ENCODE measurements at regions of chr19 and their contacts with region 1.

Region 1: GRCh38 chr19:39384839-39385568 is 5.9 kb downstream of the PAF1 start:
- DNase-seq: no peak
- ATAC-seq: peak; percentile 17

Region 2: GRCh38 chr19:39246951-39247669 is 137.9 kb before region 1 on chr19:
- intact Hi-C with region 1: no loop called
- DNase-seq: no peak
- ATAC-seq: no peak

Region 3: GRCh38 chr19:39307046-39307823 is 77.8 kb before region 1 on chr19:
- intact Hi-C with region 1: no loop called
- DNase-seq: no peak
- ATAC-seq: peak; percentile 39

Region 4: GRCh38 chr19:39351537-39352064 is 33.4 kb before region 1 on chr19:
- intact Hi-C with region 1: loop called (anchors 2 kb)
- DNase-seq: no peak
- ATAC-seq: peak; percentile 33

Measured in Right ventricle myocardium inferior (tissue), 1 donor.